Right cardiac atrium (tissue), 5 donors: ENCODE measurements at regions of chr3 and their contacts with region 1.

Region 1: DNA sequence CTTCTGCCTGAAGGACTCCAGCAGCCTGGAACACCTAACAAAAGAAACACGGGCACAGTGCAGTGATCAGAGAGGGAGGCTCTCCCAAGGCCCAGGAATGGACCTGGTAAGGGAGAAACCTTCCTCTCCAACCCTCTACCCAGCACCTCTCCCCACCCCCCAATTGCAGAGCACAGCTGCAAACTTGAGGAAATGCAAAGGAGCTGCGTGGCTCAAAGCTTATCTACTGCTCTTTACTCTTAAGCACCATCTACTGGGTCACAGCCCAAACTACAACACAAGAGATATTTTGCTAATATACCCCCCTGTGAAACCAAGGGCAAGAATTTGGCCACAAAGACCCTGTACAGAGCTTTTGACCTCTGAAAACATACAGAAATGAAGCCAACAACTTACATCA is 328.3 kb downstream of the OXSM start:
- DNase-seq: no peak
- ATAC-seq: no peak
- H3K4me3 ChIP-seq: no peak overlapping the region
- H3K27ac ChIP-seq: no peak overlapping the region
- H3K4me1 ChIP-seq: no peaks in the 10 kb centered on the region
- H3K27me3 ChIP-seq: no peaks in the 10 kb centered on the region

Region 2: DNA sequence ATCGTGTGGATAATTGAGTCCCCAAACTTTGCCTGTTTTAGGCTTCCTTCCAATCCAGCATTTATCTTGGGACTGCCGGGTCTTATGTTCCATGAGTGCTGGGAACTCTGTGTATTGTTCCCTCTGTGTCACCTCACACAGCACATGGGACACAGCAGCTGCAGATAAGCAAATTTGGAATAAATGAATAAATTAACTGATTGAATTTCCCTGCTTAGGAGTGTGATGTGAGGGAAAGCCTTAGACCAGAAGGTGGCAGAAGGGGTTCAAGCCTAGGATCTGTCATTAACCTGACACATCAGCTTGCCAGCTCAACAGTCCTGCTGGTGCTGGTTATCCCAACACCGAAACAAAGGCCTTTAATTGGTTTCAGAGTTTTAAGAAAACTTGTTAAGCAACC is 214.0 kb before region 1 on chr3:
- intact Hi-C with region 1: loop called in 2 of 4 experiments (anchors 5 to 10 kb)
- DNase-seq: no peak
- ATAC-seq: peak; percentile 63 to 83
- H3K4me3 ChIP-seq: no peak overlapping the region
- H3K27ac ChIP-seq: no peak overlapping the region
- H3K4me1 ChIP-seq: no peaks in the 10 kb centered on the region
- H3K27me3 ChIP-seq: no peaks in the 10 kb centered on the region

Region 3: GRCh38 chr3:25910997-25911396 is 207.2 kb before region 1 on chr3:
- intact Hi-C with region 1: loop called in 2 of 4 experiments (anchors 10 kb)
- DNase-seq: peak in 1 of 3 donors; percentile 33
- ATAC-seq: no peak
- H3K4me3 ChIP-seq: no peak overlapping the region
- H3K27ac ChIP-seq: no peak overlapping the region
- H3K4me1 ChIP-seq: no peaks in the 10 kb centered on the region
- H3K27me3 ChIP-seq: no peaks in the 10 kb centered on the region

Region 4: GRCh38 chr3:25952133-25952532 is 166.0 kb before region 1 on chr3:
- intact Hi-C with region 1: no loop called
- DNase-seq: no peak
- ATAC-seq: no peak
- H3K4me3 ChIP-seq: no peak overlapping the region
- H3K27ac ChIP-seq: no peak overlapping the region
- H3K4me1 ChIP-seq: no peaks in the 10 kb centered on the region
- H3K27me3 ChIP-seq: no peaks in the 10 kb centered on the region